K562 (cell line): ENCODE measurements at regions of chr5 and their contacts with region 1.

Region 1: GRCh38 chr5:51371052-51371451 is 12.2 kb upstream of the ISL1 start:
- DNase-seq: no peak
- ATAC-seq: no peak
- H3K4me3 ChIP-seq: no peak overlapping the region
- H3K27ac ChIP-seq: no peak overlapping the region
- H3K4me1 ChIP-seq: no peaks in the 10 kb centered on the region
- H3K27me3 ChIP-seq: no peaks in the 10 kb centered on the region
- CTCF ChIP-seq: no peak
- EP300 ChIP-seq: no peak
- POLR2A ChIP-seq: no peak
- RAD21 ChIP-seq: no peak

Region 2: GRCh38 chr5:51382763-51383490 is 11.9 kb after region 1 on chr5 and contains the start of gene ISL1:
- CTCF ChIA-PET with region 1: no interaction called
- POLR2A ChIA-PET with region 1: no interaction called
- in situ Hi-C with region 1: no loop called
- intact Hi-C with region 1: no loop called
- DNase-seq: peak in 3 of 4 experiments; percentile 26 to 45 (median 34)
- ATAC-seq: peak; percentile 94
- H3K4me3 ChIP-seq: no peak within 1 kb of the TSS
- H3K27ac ChIP-seq: no peak within 1 kb of the TSS
- H3K4me1 ChIP-seq: peaks cover 0 to 9% of the 10 kb centered on the region in 2 experiments; a peak in 1 of 5 replicates
- H3K27me3 ChIP-seq: peaks cover 9 to 28% of the 10 kb centered on the region in 2 experiments; a peak in 4 of 5 replicates
- CTCF ChIP-seq: no peak
- EP300 ChIP-seq: no peak
- POLR2A ChIP-seq: no peak
- RAD21 ChIP-seq: no peak
- polyA plus RNA-seq, gene ISL1: not detected

Region 3: GRCh38 chr5:51398875-51399642 is 28.0 kb after region 1 on chr5:
- CTCF ChIA-PET with region 1: no interaction called
- POLR2A ChIA-PET with region 1: no interaction called
- in situ Hi-C with region 1: no loop called
- intact Hi-C with region 1: loop called (anchors 2 kb)
- DNase-seq: no peak
- ATAC-seq: no peak
- H3K4me3 ChIP-seq: no peak overlapping the region
- H3K27ac ChIP-seq: no peak overlapping the region
- H3K4me1 ChIP-seq: peaks cover 0 to 6% of the 10 kb centered on the region in 2 experiments; a peak in 1 of 5 replicates
- H3K27me3 ChIP-seq: no peaks in the 10 kb centered on the region
- CTCF ChIP-seq: no peak
- EP300 ChIP-seq: no peak
- POLR2A ChIP-seq: no peak
- RAD21 ChIP-seq: no peak